PC-3 (cell line): ENCODE measurements at regions of chr5 and their contacts with region 1.

Region 1: GRCh38 chr5:35089334-35090314 is 41.9 kb upstream of the AGXT2 start:
- DNase-seq: peak; percentile 88
- ATAC-seq: peak; percentile 76
- H3K4me3 ChIP-seq: no peak overlapping the region
- H3K27ac ChIP-seq: no peak overlapping the region
- H3K4me1 ChIP-seq: no peaks in the 10 kb centered on the region
- H3K27me3 ChIP-seq: peaks cover 39% of the 10 kb centered on the region
- CTCF ChIP-seq: peak; percentile 92

Region 2: GRCh38 chr5:35182541-35183535 is 93.2 kb after region 1 on chr5:
- CTCF ChIA-PET with region 1: no interaction called
- POLR2A ChIA-PET with region 1: no interaction called
- intact Hi-C with region 1: loop called (anchors 1 kb)
- DNase-seq: peak; percentile 72
- ATAC-seq: peak; percentile 63; the same call in 1 of the 2 replicates
- H3K4me3 ChIP-seq: no peak overlapping the region
- H3K27ac ChIP-seq: no peak overlapping the region
- H3K4me1 ChIP-seq: no peaks in the 10 kb centered on the region
- H3K27me3 ChIP-seq: peaks cover 35% of the 10 kb centered on the region
- CTCF ChIP-seq: peak; percentile 83

Region 3: DNA sequence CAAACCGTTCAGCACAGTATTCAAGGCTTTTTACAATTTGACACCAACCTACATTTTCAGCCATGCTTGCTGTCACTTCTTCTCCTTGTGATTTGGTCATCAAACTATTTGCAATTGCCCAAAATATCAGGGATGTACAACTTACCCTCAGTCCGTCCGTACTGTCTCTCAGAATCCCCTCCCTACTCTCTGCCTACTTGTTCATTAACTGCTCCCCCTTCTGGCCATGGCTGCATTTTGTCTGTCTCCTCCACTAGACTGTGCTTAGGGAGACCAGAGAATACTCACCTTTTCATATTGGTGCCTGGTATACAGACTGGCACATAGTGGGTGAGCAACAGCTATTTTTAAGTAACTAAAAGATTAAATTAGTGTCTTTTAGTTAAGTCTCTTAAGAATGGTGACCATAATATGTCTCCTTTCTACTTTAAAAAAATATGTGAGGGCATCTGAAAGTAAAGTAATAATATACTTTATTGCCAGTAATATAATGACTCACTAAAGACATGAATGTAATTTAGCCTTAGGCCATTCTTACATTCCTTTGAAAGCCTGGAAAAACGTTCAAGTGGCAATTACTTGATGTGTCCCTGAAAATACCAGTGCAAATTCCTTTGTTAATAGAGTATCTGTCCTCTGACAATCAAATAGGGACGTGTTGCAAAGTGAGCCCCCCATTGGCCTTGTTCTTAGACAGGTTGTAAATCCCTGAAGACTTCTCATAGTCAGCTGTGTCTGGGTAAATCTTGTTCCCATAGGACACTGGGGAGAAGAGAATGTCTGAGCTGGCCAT is 112.9 kb after region 1 on chr5:
- CTCF ChIA-PET with region 1: no interaction called
- POLR2A ChIA-PET with region 1: no interaction called
- intact Hi-C with region 1: loop called (anchors 5 kb)
- DNase-seq: peak; percentile 71
- ATAC-seq: peak; percentile 79
- H3K4me3 ChIP-seq: no peak overlapping the region
- H3K27ac ChIP-seq: no peak overlapping the region
- H3K4me1 ChIP-seq: 0 out of 2 replicates have a peak, but pooled peaks cover 22% of the 10 kb centered on the region
- H3K27me3 ChIP-seq: peaks cover 42% of the 10 kb centered on the region
- CTCF ChIP-seq: peak; percentile 86

Region 4: DNA sequence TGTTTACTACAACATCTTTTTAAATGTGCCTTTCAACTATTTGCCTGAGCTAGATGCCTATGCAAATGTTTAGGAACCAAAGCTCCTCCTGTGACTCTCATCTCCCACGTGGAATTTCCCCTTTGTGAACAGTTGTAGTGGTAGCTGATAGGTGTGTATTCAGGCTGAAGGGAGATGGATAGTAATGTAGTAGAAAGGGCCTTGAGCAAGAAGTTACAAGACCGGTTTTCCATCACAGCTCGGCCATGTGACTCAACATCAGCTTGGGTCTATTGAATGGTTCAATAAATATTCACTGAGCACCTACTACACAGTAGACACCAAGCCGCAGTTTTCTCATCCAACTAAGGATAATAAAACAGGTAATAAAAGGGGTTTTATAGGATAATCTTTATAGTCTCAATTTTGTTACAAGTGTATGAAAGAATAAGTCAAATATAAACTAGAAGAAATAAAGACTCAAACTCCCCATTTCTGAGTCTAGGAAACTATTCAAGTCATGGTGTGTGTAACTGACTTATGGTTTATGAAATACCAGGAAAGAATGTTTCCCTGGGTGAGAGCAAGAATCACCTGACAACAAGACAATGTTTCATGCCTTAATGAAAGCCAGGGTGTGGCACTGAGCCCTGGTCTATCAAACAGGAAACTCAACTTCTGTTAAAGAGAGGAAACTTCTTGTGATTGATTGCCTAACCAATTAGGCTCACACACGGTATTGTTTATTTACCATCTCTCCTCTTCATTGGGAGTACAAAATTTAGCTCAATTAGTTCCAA is 340.9 kb after region 1 on chr5:
- CTCF ChIA-PET with region 1: no interaction called
- POLR2A ChIA-PET with region 1: no interaction called
- intact Hi-C with region 1: no loop called
- DNase-seq: peak; percentile 6
- ATAC-seq: no peak
- H3K4me3 ChIP-seq: no peak overlapping the region
- H3K27ac ChIP-seq: no peak overlapping the region
- H3K4me1 ChIP-seq: no peaks in the 10 kb centered on the region
- H3K27me3 ChIP-seq: peaks cover 87% of the 10 kb centered on the region
- CTCF ChIP-seq: no peak

Region 5: GRCh38 chr5:35598707-35599370 is 509.2 kb after region 1 on chr5:
- CTCF ChIA-PET with region 1: no interaction called
- POLR2A ChIA-PET with region 1: no interaction called
- intact Hi-C with region 1: loop called (anchors 2 kb)
- DNase-seq: peak; percentile 39
- ATAC-seq: peak; percentile 57
- H3K4me3 ChIP-seq: no peak overlapping the region
- H3K27ac ChIP-seq: no peak overlapping the region
- H3K4me1 ChIP-seq: no peaks in the 10 kb centered on the region
- H3K27me3 ChIP-seq: peaks cover 5% of the 10 kb centered on the region; the same call in 1 of the 2 replicates
- CTCF ChIP-seq: peak; percentile 54